ENCODE measurements at regions of chr4 and their contacts with region 1.

Region 1: GRCh38 chr4:21790438-21791029 is 158.0 kb downstream of the KCNIP4 start:
- DNase-seq: no peak
- H3K4me3 ChIP-seq: no peak overlapping the region
- H3K27ac ChIP-seq: no peak overlapping the region
- H3K4me1 ChIP-seq: no peaks in the 10 kb centered on the region
- H3K27me3 ChIP-seq: no peaks in the 10 kb centered on the region
- CTCF ChIP-seq: peak in 2 of 3 experiments; percentile 14 to 25; a peak in 2 of 4 replicates
- EP300 ChIP-seq: no peak
- POLR2A ChIP-seq: no peak
- RAD21 ChIP-seq: peak; percentile 55 to 68

Region 2: GRCh38 chr4:21710179-21710835 is 80.2 kb before region 1 on chr4:
- CTCF ChIA-PET with region 1: no interaction called
- POLR2A ChIA-PET with region 1: no interaction called
- DNase-seq: no peak
- H3K4me3 ChIP-seq: no peak overlapping the region
- H3K27ac ChIP-seq: no peak overlapping the region
- H3K4me1 ChIP-seq: peaks cover 0 to 6% (median 3%) of the 10 kb centered on the region in 4 experiments; a peak in 3 of 7 replicates
- H3K27me3 ChIP-seq: no peaks in the 10 kb centered on the region
- CTCF ChIP-seq: no peak
- EP300 ChIP-seq: no peak
- POLR2A ChIP-seq: no peak
- RAD21 ChIP-seq: no peak

Region 3: GRCh38 chr4:21733894-21734630 is 56.5 kb before region 1 on chr4:
- CTCF ChIA-PET with region 1: no interaction called
- POLR2A ChIA-PET with region 1: no interaction called
- DNase-seq: no peak
- H3K4me3 ChIP-seq: no peak overlapping the region
- H3K27ac ChIP-seq: no peak overlapping the region
- H3K4me1 ChIP-seq: no peaks in the 10 kb centered on the region
- H3K27me3 ChIP-seq: peaks cover 0 to 1% (median 0%) of the 10 kb centered on the region in 4 experiments; a peak in 1 of 7 replicates
- CTCF ChIP-seq: no peak
- EP300 ChIP-seq: no peak
- POLR2A ChIP-seq: no peak
- RAD21 ChIP-seq: no peak

Region 4: DNA sequence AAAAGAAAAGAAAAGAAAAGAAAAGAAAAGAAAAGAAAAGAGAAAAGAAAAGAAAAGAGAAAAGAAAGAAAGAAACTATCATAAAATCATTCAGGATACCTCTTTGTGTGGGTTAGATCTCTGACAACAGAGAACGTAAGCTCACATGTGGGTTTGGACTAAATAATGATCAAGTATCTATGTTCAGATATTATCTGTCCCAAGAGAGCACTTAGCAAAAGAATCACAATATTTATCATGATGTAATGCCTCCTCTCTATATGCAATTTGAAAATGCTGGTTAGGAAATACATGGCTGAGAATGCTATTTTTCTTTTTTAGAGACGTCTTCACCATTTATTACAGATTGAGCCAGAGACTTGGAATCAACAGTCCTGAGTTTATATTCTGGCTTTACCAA is 33.3 kb before region 1 on chr4:
- CTCF ChIA-PET with region 1: no interaction called
- POLR2A ChIA-PET with region 1: no interaction called
- DNase-seq: no peak
- H3K4me3 ChIP-seq: no peak overlapping the region
- H3K27ac ChIP-seq: no peak overlapping the region
- H3K4me1 ChIP-seq: peaks cover 0 to under 1% (median 0%) of the 10 kb centered on the region in 4 experiments; a peak in 2 of 7 replicates
- H3K27me3 ChIP-seq: no peaks in the 10 kb centered on the region
- CTCF ChIP-seq: no peak
- EP300 ChIP-seq: no peak
- POLR2A ChIP-seq: no peak
- RAD21 ChIP-seq: no peak

Region 5: DNA sequence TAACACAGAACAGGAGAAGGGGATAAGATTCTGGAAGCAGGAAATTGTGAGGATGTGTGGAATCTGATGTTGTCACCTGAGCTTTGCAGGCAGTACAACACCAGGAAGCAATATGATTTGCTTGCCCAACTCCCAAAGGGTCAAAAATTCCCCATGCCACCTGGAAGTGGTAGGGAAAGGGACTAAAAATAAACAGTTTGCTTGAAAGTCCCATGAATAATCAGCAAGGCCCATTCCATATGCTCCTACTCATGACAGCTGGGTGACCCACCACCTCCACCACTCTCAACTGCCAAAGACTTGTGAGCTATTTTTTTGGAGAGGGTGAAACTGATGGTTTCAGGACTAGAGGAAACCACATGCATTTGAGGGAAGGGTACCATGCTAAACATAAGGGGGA is 10.4 kb before region 1 on chr4:
- CTCF ChIA-PET with region 1: interaction called, 16 read pairs
- POLR2A ChIA-PET with region 1: no interaction called
- DNase-seq: no peak
- H3K4me3 ChIP-seq: no peak overlapping the region
- H3K27ac ChIP-seq: no peak overlapping the region
- H3K4me1 ChIP-seq: no peaks in the 10 kb centered on the region
- H3K27me3 ChIP-seq: no peaks in the 10 kb centered on the region
- CTCF ChIP-seq: no peak
- EP300 ChIP-seq: no peak
- POLR2A ChIP-seq: no peak
- RAD21 ChIP-seq: no peak

Region 6: DNA sequence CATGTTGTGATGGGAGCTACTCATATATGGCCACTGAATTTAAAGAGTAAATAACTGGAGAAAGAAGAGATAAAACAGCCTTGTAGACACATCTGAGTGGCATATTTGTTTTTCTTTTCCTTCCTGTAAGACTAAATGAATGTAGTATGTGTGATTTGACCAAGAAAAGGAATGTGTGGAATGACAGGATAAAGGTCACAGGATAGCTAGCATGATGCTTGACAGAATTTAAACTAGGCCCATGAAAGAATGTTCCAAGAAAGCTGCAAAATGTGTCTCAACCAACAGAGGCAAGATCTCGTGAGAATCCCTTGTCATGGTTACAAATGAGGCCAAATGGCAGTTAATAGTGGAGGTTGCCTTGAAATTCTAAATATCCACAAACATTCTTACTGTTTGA is 21.0 kb after region 1 on chr4:
- CTCF ChIA-PET with region 1: interaction called, 11 read pairs
- POLR2A ChIA-PET with region 1: no interaction called
- DNase-seq: no peak
- H3K4me3 ChIP-seq: no peak overlapping the region
- H3K27ac ChIP-seq: no peak overlapping the region
- H3K4me1 ChIP-seq: no peaks in the 10 kb centered on the region
- H3K27me3 ChIP-seq: no peaks in the 10 kb centered on the region
- CTCF ChIP-seq: no peak
- EP300 ChIP-seq: no peak
- POLR2A ChIP-seq: no peak
- RAD21 ChIP-seq: no peak

Region 7: GRCh38 chr4:21858971-21859370 is 68.4 kb after region 1 on chr4:
- CTCF ChIA-PET with region 1: no interaction called
- POLR2A ChIA-PET with region 1: no interaction called
- DNase-seq: no peak
- H3K4me3 ChIP-seq: no peak overlapping the region
- H3K27ac ChIP-seq: no peak overlapping the region
- H3K4me1 ChIP-seq: no peaks in the 10 kb centered on the region
- H3K27me3 ChIP-seq: peaks cover 0 to 1% (median 0%) of the 10 kb centered on the region in 4 experiments; a peak in 1 of 7 replicates
- CTCF ChIP-seq: no peak
- EP300 ChIP-seq: no peak
- POLR2A ChIP-seq: no peak
- RAD21 ChIP-seq: no peak

Region 8: DNA sequence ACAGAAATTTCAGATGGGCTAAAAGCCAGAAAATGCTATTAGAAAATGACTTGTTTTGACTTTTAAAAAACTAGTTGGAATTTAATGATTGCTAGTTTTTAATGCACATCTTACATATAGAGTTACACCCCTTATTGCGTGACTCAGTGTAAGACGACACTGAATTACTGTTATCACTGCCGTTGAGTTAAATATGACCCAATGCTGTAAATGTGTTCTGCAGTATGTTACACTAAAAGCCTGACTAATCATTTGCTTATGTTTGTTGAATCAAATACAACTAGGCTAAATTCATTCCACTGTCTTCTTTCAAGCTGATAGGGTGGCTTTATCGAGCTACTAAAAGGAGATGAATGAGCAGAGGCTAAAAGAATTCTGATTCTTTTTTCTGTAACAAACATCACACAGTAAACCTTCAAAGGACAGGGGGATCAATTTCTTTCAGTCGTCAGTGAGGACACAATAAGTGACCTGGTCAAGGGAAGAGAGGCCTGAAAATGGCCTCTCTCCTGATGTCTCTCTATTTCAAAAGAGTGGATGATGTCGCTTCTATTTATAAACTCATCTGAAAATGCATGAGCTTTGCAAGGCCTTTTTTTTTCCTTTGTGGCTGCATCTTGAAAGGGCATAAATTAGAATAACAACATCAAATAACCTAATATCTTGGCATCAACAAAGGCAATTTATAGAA is 300.3 kb after region 1 on chr4:
- CTCF ChIA-PET with region 1: interaction called, 37 read pairs
- POLR2A ChIA-PET with region 1: no interaction called
- DNase-seq: no peak
- H3K4me3 ChIP-seq: no peak overlapping the region
- H3K27ac ChIP-seq: no peak overlapping the region
- H3K4me1 ChIP-seq: no peaks in the 10 kb centered on the region
- H3K27me3 ChIP-seq: no peaks in the 10 kb centered on the region
- CTCF ChIP-seq: no peak
- EP300 ChIP-seq: no peak
- POLR2A ChIP-seq: no peak
- RAD21 ChIP-seq: no peak

Region 9: DNA sequence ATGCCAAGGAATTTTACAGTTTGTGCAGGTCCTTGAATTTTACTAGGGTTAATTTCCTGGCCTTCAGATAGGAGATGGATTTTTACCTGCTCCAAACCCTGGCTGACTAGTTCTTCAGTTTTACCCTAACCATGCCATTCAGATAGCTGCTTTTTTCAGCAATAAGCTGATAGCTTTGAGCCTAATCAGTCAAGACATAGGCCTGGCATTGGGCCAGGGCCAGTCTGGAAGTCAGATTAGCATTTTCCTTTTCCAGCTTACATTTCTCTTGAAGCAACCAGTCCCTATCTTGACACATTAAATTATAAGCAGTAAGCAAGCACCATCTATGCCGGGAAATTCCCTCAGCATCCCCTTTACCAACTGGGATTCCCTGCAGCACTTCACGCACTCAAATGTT is 548.3 kb after region 1 on chr4:
- CTCF ChIA-PET with region 1: interaction called, 14 read pairs
- POLR2A ChIA-PET with region 1: no interaction called
- DNase-seq: no peak
- H3K4me3 ChIP-seq: no peak overlapping the region
- H3K27ac ChIP-seq: no peak overlapping the region
- H3K4me1 ChIP-seq: no peaks in the 10 kb centered on the region
- H3K27me3 ChIP-seq: no peaks in the 10 kb centered on the region
- CTCF ChIP-seq: no peak
- EP300 ChIP-seq: no peak
- POLR2A ChIP-seq: no peak
- RAD21 ChIP-seq: no peak